ENCODE measurements at regions of chr19 and their contacts with region 1.

Region 1: DNA sequence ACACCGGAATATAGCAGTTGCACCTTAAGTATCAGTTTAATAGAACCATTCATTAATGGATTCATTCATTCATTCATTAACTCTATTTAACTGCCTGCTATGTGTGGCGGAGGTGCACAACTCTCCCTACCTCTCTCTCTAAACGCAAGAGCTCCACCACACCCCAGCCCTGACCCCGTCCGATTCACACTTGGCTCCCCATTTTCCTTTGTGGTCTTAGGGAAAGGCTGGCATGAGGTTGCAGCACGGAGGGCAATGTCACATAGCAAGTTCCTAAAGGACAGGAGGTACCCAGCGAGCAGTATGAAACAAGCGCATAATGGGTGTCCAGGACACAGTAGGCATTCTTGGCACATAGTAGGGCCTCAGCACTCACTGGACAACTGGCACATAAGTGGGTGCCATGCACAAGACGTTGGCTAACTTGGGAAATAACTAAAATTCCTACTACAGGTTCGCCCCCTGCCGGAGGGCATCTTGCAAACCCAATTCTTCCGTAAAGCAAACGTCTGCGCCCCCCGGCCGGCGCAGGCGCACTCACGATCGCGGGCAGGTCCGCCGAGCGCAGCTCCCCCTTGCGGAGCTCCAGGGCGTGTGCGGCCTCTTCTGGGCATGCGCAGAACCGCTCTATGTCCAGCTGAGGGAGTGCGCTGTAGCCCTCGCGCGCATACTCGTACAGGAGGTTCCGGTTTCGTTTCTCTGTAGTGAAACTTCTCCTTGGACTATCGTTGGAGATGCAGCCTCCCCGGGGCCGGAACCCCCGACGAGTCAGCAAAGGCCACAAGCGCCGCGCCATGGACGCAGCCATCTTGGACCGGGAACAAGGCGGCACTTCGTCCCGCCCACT is at the start of gene SARS2:
- DNase-seq: peak; percentile 97
- H3K4me3 Mint-ChIP-seq: peak within 1 kb of the TSS; percentile 96
- H3K27ac Mint-ChIP-seq: peak within 1 kb of the TSS; percentile 96
- H3K4me1 Mint-ChIP-seq: peaks cover 25% of the 10 kb centered on the region
- H3K27me3 Mint-ChIP-seq: no peaks in the 10 kb centered on the region
- total RNA-seq, gene SARS2: 41.6 and 42.6 TPM in 2 replicates

Region 2: DNA sequence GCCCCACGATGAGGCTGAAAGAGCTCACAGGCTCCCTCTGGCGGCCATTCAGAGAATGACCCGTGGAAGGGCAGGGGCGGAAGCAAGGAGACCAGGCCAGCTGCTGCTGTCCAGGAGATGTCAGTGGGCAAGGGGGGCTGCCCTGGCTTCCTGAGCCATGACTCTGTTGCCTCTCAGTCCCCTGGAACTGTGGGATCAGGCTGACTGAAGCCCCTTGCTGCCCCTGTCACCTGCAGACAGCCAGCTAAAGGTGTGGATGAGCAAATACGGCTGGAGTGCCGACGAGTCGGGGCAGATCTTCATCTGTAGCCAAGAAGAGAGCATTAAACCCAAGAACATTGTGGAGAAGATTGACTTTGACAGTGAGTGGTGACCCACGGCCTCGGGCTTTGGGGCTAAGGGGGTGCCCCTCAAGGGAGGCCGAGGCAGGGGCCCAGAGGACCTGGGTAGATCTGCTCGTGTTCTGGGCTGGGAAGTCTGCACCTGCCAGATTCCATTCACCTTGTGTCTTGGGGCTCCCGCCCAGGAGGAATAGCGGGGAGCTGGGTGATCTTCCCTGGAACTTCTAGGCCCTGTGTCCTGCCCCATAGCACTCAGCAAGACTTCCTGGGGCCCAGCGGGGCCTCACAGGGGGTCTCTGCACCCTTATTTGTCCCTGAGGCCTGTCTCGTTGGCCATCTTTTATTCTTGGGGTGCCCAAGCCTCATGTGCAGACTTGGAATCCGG is 295.2 kb before region 1 on chr19:
- intact Hi-C with region 1: loop called (anchors 5 kb)
- DNase-seq: peak; percentile 94
- H3K4me3 Mint-ChIP-seq: peak overlapping the region; percentile 55
- H3K27ac Mint-ChIP-seq: peak overlapping the region; percentile 71
- H3K4me1 Mint-ChIP-seq: peaks cover 26% of the 10 kb centered on the region
- H3K27me3 Mint-ChIP-seq: no peaks in the 10 kb centered on the region

Region 3: DNA sequence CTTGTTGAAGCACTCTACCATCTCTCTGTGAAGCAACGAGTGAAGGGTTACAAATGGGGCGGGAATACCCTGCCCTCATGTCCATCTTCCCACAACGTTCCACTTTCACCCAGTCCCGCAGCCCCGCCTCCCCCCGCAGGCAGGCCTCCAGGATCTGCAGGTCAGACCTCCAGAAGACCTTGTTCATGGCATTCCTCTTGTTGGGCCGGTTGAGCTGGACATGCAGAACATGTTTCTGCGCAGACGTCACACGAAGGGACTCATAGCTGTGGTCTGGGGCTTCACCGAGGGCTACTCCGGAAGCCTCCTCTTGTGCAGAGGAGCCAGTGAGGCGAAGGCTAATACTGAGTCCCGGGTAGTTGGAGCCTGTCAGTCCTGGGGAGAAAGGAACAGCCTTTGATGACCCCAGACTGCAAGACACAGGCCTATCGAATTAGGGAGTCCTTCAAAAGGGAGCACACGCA is 99.0 kb before region 1 on chr19:
- intact Hi-C with region 1: loop called (anchors 1 kb)
- DNase-seq: peak; percentile 81
- H3K4me3 Mint-ChIP-seq: peak overlapping the region; percentile 99
- H3K27ac Mint-ChIP-seq: peak overlapping the region; percentile 93
- H3K4me1 Mint-ChIP-seq: peaks cover 20% of the 10 kb centered on the region
- H3K27me3 Mint-ChIP-seq: no peaks in the 10 kb centered on the region

Region 4: DNA sequence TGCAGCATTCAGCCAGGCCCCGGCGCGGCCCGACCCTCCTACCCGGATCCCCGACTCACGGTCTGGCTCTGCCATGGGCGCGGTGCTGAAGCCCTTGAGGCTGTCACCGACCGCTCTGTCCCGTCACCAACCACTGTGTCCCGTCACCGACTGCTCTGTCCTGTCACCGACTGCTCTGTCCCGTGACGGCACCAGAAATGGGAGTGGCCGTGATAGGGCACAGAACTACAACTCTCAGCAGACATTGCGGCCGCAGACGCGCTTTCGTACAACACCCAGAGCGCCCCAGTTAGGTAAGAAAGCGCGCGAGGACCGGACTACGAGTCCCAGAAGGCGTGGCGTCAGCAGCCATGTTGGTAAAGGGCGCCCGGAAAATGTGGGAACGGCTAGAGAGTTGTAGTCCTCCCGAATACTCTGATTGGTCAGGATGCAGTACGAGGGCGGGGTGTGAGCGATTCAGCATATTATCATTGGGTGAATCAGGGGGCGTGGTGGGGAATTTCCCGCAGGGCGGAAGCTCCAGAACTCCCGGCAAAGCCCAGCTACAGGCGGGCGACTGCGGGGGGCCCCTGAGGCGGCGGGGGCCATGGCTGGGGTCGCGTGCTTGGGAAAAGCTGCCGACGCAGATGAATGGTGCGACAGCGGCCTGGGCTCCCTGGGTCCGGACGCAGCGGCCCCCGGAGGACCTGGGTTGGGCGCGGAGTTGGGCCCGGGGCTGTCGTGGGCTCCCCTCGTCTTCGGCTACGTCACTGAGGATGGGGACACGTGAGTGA is 30.5 kb before region 1 on chr19 and contains the starts of genes NFKBIB and SIRT2:
- intact Hi-C with region 1: loop called (anchors 1 kb)
- DNase-seq: peak; percentile 100
- H3K4me3 Mint-ChIP-seq: peak within 1 kb of the TSS; percentile 93
- H3K27ac Mint-ChIP-seq: peak within 1 kb of the TSS; percentile 95
- H3K4me1 Mint-ChIP-seq: peaks cover 37% of the 10 kb centered on the region
- H3K27me3 Mint-ChIP-seq: no peaks in the 10 kb centered on the region
- total RNA-seq, gene NFKBIB: 89.2 and 89.7 TPM in 2 replicates
- total RNA-seq, gene SIRT2: 23.6 and 30.1 TPM in 2 replicates

Region 5: GRCh38 chr19:38944981-38945506 is 14.9 kb after region 1 on chr19:
- intact Hi-C with region 1: no loop called
- DNase-seq: no peak
- H3K4me3 Mint-ChIP-seq: no peak overlapping the region
- H3K27ac Mint-ChIP-seq: no peak overlapping the region
- H3K4me1 Mint-ChIP-seq: peaks cover 10% of the 10 kb centered on the region
- H3K27me3 Mint-ChIP-seq: peaks cover 17% of the 10 kb centered on the region

Region 6: DNA sequence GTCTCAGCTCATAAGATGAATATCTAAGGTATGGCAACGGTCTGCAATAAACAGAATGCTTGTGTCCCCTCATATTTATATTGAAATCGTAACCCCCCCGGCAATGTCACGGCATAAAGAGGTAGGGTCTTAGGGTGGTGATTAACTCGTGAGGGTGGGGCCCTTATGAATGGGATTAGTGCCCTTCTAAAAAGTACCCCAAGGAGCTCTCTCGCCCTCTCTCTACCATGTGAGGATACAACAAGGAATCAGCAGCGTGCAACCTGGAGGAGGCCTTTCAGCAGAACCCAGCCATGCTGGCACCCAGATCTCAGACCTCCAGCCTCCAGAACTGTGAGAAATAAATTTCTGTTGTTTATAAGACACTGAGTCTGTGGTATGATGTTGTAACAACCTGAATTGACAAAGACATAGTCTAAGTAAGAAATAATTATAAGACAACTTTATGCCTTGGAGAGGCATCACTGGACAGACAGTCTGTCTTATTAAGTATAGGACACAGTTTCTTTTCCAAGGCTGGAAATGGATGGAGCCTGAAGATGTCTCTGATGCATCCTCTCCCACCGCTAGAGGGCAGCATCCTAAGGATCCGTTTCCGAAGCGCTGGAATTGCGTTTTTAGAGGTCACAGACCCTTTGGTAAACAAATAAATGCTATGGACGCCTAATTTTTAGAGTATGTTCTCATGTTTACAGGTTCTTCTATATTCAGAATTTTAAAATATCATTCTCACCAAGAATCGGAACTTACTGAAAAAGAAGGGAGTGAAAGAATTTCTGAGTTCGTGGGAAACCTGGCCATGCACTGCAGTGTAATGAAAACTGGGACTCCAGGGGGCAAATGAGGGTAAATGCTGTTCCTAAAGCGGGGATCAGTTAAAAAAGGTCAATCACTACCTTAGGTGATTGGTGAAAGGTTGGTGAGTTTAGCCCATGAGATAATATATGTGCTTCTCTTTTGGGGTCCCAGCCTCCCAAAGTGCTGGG is 835.2 kb after region 1 on chr19:
- intact Hi-C with region 1: no loop called
- DNase-seq: peak; percentile 79
- H3K4me3 Mint-ChIP-seq: no peak overlapping the region
- H3K27ac Mint-ChIP-seq: no peak overlapping the region
- H3K4me1 Mint-ChIP-seq: peaks cover 4% of the 10 kb centered on the region
- H3K27me3 Mint-ChIP-seq: peaks cover 22% of the 10 kb centered on the region

Measured in activated CD4-positive, alpha-beta T cell treated with anti-CD3 and anti-CD28 coated beads, Interleukin-2, amount 10 ng/mL, durations not matched to agents 24 days and 14 days (primary cell).